ENCODE measurements at regions of chr19 and their contacts with region 1.

Region 1: DNA sequence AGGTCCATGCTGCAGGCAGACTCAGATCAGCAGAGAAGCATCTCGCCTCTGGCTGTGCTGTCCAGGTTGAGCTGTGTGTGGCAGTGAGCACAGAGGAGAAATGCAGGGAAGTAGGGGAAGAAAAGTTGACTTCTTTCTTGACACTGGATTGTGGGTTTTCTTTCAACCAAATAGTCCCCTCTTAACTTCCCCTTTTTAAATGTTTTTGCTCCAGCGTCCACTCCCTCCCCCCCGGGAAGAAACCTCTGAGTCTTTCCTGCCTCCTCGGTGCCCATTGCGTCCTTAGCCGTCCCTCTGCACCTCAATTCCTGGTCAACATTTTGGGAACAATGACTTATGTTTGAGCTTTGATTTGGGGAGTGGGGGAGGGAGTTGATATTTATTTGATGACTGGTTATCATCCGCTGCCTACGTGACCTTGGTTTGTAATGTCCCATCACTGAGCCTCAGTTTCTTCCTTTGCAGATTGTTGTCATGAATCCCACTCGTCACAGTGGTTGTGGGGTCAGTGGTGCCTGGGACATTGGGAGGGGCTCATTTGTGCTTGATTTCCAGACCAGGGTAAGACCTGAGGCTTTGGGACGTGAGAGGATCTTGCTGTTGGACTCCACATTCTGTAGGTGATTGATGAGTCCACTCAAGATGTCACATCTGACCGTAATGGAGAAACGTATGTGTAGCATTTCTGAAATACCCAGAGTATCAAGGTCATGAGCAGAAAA is at the start of gene LILRB2:
- DNase-seq: peak in 1 of 4 donors; percentile 24
- ATAC-seq: no peak
- H3K4me3 ChIP-seq: no peak within 1 kb of the TSS
- H3K27ac ChIP-seq: peak within 1 kb of the TSS in 1 of 4 donors; percentile 62
- H3K4me1 ChIP-seq: no peaks in the 10 kb centered on the region
- H3K27me3 ChIP-seq: peaks cover 0 to 5% of the 10 kb centered on the region in 2 donors
- CTCF ChIP-seq: no peak
- POLR2A ChIP-seq: no peak
- total RNA-seq, gene LILRB2: 0.78 to 1.3 TPM

Region 2: GRCh38 chr19:54586397-54586796 is 305.2 kb after region 1 on chr19:
- intact Hi-C with region 1: loop called (anchors 2 kb)
- DNase-seq: no peak
- ATAC-seq: no peak
- H3K4me3 ChIP-seq: no peak overlapping the region
- H3K27ac ChIP-seq: no peak overlapping the region
- H3K4me1 ChIP-seq: no peaks in the 10 kb centered on the region
- H3K27me3 ChIP-seq: no peaks in the 10 kb centered on the region
- CTCF ChIP-seq: no peak
- POLR2A ChIP-seq: no peak